HEK293T (cell line): ENCODE measurements at regions of chr17 and their contacts with region 1.

Region 1: GRCh38 chr17:75632863-75633485 is at the start of gene SMIM5:
- DNase-seq: peak; percentile 91

Region 2: DNA sequence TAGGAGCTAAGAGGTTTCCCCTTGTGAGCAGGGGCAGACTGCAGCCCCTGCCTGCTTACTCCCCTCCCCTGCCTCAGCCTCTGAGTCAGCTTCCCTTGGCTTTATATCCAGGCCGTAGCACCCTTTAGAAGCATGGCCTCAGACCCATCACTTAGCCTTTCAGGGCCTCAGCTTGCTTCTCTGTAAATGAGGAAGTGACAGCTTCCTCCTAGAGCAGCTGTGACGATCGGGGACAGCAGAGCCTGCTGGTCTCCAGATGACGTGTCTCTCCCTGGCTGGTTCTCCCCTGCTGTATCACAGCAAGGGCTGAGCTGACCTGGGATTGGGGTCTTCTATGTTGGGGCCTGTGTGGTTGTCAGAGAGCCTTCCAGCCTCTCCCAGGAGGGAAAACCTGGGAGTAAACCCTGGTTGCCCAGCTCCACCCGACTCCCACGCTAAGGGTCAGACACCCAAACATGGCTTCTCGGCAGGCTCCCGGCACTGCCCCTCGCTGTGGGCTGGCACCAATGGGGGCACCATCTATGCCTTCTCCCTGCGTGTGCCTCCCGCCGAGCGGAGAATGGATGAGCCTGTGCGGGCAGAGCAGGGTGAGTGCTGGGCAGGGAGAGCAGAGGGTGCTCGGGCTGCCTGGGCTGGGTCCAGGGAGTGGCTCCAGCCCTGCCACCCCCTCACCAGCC is 61.6 kb before region 1 on chr17:
- CTCF ChIA-PET with region 1: no interaction called
- POLR2A ChIA-PET with region 1: no interaction called
- DNase-seq: no peak

Region 3: DNA sequence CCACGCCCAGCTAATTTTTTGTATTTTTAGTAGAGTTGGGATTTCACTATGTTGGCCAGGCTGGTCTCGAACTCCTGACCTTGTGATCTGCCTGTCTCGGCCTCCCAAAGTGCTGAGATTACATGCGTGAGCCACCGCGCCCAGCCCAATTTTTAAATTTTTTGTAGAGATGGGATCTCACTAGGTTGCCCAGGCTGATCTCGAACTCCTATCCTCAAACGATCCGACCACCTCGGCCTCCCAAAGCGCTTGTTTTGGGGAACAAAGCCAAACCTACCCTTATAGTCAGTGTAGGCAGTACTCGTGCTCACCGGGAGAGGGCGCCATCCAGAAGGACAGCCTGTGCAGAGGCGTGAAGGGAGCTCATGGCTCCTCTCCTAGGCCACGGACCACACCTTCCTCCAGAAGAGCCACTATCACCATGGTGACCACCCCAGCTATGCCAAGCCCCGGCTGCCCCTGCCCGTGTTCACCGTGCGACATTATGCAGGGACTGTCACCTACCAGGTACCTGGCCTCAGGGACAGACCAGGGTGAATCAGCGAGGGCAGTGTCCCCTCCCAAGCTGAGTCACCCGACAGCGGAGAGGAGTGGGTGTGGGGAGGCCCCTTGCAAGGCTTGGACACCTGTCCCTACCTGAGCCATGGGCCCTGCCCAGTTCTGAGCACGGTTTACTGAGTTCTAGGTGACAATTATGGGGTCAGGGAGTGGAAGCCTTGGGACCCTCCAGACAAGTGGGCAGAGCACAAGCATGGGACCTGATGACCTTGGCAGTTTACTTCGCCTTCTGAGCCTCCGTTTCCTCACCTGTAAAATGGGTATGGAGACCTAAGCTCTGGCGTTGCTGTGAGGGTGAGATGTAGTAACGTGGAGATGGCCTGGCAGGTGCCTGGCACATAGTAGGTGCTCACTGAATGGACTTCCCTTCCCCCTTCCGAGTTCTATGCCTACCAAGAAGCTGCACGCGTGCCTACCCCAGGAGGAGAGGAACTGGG is 31.6 kb before region 1 on chr17:
- CTCF ChIA-PET with region 1: interaction called, 12 read pairs
- POLR2A ChIA-PET with region 1: no interaction called
- DNase-seq: peak; percentile 89

Region 4: GRCh38 chr17:75619506-75620431 is 13.2 kb before region 1 on chr17:
- CTCF ChIA-PET with region 1: interaction called, 58 read pairs
- POLR2A ChIA-PET with region 1: interaction called, 3 read pairs
- DNase-seq: peak; percentile 61

Region 5: DNA sequence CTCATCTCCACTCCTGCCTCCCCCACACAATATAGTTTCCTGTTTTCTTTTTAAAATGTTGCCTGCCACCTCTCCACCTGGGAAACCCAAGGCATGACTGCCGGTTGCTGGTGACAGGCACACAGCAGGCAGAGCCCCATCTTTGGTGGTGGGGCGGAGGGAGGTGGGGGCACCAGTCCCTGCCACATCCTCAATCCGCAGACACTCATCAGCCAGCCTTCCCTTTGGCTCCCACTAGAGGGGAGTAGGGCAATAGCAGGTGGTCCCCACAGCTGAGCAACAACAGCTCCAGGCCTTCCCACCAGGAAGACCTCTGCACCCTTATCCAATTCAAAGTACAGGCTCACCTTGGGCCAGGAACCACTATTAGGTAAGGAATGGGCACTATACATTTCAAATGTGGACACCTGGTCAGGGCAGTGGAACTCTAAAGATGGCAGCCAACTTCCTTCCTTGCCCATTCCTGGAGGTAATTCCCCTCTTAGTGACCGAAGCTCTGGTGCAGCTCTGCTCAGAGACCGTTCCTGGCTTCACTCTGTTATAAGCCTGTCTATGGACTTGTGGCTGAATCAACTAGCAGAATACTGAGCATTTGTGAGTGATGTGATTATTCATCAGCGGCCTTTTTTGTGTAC is 20.1 kb after region 1 on chr17:
- CTCF ChIA-PET with region 1: interaction called, 69 read pairs
- POLR2A ChIA-PET with region 1: interaction called, 5 read pairs
- DNase-seq: peak; percentile 80

Region 6: DNA sequence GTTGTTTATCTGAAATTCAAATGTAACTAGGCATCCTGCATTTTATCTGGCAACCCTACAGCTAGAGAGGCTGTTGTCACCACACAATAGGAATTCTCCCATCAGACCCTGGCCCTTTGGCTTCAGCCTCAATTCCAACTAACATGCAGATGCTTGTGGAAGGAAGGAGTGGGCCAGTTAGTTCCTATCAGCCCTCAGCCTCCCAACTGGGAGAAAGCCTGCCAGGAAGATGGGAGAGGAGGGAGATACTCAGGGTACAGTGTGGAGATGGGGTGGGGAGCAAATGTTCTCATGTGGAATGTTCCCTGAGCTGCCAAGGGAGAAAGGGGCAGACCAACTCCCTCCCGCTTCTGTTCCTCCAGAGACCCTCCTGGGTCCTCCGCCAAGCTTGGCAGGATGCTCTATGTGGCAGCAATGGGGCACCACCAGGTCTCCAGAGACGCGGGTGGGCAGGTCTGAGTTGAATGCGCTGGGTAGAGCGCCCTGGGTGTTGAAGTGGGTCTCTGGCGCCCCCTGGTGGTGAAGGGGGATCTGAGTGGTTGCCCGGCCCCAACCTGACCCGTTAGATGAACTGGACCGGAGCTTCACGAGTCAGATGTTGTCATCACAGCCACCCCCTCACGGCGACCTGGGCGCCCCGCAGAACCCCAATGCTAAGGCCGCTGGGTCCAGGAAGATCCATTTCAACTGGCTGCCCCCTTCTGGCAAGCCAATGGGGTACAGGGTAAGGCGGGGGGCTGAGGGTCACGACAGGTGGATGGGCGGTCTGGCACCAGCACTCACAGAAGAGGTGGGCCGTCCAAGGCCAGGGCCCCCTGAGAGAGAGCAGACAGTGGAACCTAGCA is 116.8 kb after region 1 on chr17:
- CTCF ChIA-PET with region 1: interaction called, 93 read pairs
- POLR2A ChIA-PET with region 1: interaction called, 8 read pairs
- DNase-seq: peak; percentile 85